Heart left ventricle (tissue), 16 donors: ENCODE measurements at regions of chr18 and their contacts with region 1.

Region 1: DNA sequence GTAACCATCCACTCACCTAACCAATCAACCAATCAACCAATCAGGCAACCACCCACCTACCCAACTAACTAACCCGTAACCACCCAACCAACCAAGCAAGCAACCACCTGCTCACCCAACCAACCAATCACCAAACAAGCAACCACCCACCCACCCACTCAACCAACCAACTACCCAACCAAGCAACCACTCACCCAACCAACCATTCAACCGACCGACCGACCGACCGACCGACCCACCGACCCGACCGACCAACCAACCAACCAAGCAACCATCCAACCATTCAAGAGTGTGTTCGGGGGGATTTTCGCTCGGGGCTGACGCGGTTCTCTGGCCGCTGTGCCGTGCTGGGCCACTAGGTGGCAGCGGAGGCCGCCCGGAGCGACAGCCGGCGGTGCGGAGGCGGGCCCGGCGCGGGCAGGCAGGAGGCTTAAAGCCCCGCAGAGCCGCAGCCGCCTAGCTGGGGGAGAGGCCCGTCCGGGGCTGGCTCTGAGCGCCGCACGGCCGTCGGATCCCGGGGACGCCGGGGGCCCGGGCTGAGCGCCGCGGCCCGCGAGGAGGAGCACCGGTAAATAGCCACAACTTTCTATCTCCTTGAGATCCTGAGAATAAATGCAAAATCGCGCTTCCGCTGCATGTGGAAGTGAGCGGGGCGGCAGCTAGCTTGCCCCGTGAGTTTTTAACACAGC is at the start of gene MC5R:
- DNase-seq: peak; percentile 47 to 88 (median 57)
- ATAC-seq: peak; percentile 64 to 97 (median 82)
- H3K4me3 ChIP-seq: peak within 1 kb of the TSS in 10 of 12 donors; percentile 2 to 61 (median 46)
- H3K27ac ChIP-seq: no peak within 1 kb of the TSS
- H3K4me1 ChIP-seq: peaks cover 0 to 7% (median 1%) of the 10 kb centered on the region in 12 donors
- H3K27me3 ChIP-seq: peaks cover 6 to 41% (median 12%) of the 10 kb centered on the region in 9 donors
- CTCF ChIP-seq: peak; percentile 58 to 97 (median 81)
- POLR2A ChIP-seq: no peak
- total RNA-seq, gene MC5R: not detected

Region 2: GRCh38 chr18:13447626-13448334 is 376.1 kb before region 1 on chr18:
- intact Hi-C with region 1: no loop called
- DNase-seq: peak in 3 of 5 donors; percentile 49 to 63 (median 58)
- ATAC-seq: peak in 3 of 4 donors; percentile 31 to 59 (median 39)
- H3K4me3 ChIP-seq: peak overlapping the region in 2 of 12 donors; percentile 0 to 22
- H3K27ac ChIP-seq: peak overlapping the region in 3 of 12 donors; percentile 12 to 51 (median 32)
- H3K4me1 ChIP-seq: peaks cover 0 to 57% (median 27%) of the 10 kb centered on the region in 12 donors
- H3K27me3 ChIP-seq: no peaks in the 10 kb centered on the region
- CTCF ChIP-seq: no peak
- POLR2A ChIP-seq: no peak

Region 3: GRCh38 chr18:13982136-13982535 is 158.3 kb after region 1 on chr18:
- intact Hi-C with region 1: no loop called
- DNase-seq: no peak
- ATAC-seq: no peak
- H3K4me3 ChIP-seq: no peak overlapping the region
- H3K27ac ChIP-seq: no peak overlapping the region
- H3K4me1 ChIP-seq: no peaks in the 10 kb centered on the region
- H3K27me3 ChIP-seq: no peaks in the 10 kb centered on the region
- CTCF ChIP-seq: no peak
- POLR2A ChIP-seq: no peak

Region 4: DNA sequence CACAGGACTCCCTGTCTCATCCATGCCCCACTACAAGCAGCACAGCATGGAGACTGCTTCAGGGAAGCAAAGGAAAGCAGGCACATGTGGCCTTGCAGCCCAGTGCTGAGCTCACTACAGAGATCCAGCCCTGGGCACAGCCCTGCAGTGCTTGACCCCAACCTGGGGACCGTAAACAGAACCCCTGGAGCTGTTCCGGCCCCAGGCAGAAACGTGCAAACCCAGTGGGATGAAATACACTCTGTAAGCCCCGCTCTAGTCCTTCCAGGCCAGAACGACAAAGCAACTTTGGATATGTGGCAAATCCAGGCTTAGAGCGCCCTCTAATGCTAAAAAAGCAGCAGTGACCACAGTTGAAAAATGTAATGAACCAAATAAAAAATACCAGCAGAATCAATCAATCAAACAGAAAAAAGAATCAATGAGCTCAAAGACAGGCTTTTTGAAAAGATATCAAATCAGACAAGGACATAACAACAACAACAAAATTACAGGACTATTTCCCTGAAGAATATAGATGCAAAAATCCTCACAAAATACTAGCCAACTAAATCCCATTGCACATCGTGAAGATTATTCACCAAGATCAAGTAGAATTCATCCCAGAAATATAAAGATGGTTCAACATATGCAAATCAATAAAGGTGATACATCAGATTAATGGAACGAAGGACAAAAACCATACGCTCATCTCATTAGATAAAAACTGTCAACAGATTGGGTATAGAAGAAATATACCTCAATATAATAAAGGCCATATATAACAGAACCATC is 262.8 kb after region 1 on chr18:
- intact Hi-C with region 1: loop called (anchors 1 to 10 kb)
- DNase-seq: no peak
- ATAC-seq: peak in 3 of 4 donors; percentile 39 to 64 (median 52)
- H3K4me3 ChIP-seq: no peak overlapping the region
- H3K27ac ChIP-seq: no peak overlapping the region
- H3K4me1 ChIP-seq: peaks cover 0 to 3% (median 0%) of the 10 kb centered on the region in 12 donors
- H3K27me3 ChIP-seq: no peaks in the 10 kb centered on the region
- CTCF ChIP-seq: peak; percentile 35 to 67 (median 55)
- POLR2A ChIP-seq: no peak